ENCODE measurements at regions of chr12 and their contacts with region 1.

Region 1: GRCh38 chr12:102879144-102879763 is 37.8 kb downstream of the PAH start:
- H3K4me3 ChIP-seq: no peak overlapping the region
- H3K27ac ChIP-seq: no peak overlapping the region
- H3K4me1 ChIP-seq: no peaks in the 10 kb centered on the region
- CTCF ChIP-seq: peak; percentile 17; the same call in 1 of the 2 replicates

Region 2: GRCh38 chr12:102800565-102800964 is 78.7 kb before region 1 on chr12:
- CTCF ChIA-PET with region 1: no interaction called
- POLR2A ChIA-PET with region 1: no interaction called
- H3K4me3 ChIP-seq: no peak overlapping the region
- H3K27ac ChIP-seq: no peak overlapping the region
- H3K4me1 ChIP-seq: no peaks in the 10 kb centered on the region
- CTCF ChIP-seq: no peak

Region 3: GRCh38 chr12:102811110-102811737 is 68.0 kb before region 1 on chr12:
- CTCF ChIA-PET with region 1: interaction called, 10 read pairs
- POLR2A ChIA-PET with region 1: no interaction called
- H3K4me3 ChIP-seq: no peak overlapping the region
- H3K27ac ChIP-seq: no peak overlapping the region
- H3K4me1 ChIP-seq: no peaks in the 10 kb centered on the region
- CTCF ChIP-seq: no peak

Region 4: DNA sequence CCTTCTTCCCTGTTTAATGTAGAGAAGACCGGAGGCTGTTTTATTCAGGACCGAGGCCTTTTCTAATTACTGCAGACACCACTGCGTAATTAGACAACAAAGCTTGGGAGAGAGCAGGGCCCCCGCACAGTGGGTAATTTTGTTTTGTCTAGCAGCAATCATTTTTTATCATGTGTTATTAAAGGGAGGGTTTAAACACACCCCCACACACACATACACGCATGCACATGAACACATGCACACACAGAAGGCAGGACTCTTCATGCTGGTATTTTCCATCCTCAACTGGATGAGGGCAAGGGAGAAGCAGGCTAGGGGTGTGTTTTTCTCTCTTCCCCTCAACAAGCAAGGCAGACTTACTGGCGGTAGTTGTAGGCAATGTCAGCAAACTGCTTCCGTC is 13.0 kb before region 1 on chr12:
- CTCF ChIA-PET with region 1: interaction called, 15 read pairs
- POLR2A ChIA-PET with region 1: no interaction called
- H3K4me3 ChIP-seq: no peak overlapping the region
- H3K27ac ChIP-seq: no peak overlapping the region
- H3K4me1 ChIP-seq: no peaks in the 10 kb centered on the region
- CTCF ChIP-seq: no peak

Region 5: DNA sequence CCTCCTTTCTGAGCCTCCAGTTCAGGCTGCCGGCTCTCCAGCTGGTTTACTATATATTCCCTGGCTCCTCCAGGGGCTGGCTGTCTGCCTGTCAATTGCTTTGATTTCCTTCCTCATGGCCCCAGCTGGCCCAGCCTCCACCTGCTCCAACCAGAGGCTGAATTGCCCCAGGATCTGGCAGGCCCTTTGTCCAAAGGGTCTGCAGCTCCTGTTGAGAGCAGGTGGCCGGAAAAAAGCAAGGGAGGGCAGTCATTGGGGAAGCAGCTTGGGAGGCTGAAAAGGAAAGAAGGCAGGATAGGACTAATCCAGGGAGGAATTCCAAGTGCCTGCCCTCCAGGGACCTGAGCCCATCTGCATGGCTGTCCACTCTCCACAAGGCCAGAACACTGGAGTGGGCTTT is 12.5 kb after region 1 on chr12:
- CTCF ChIA-PET with region 1: interaction called, 19 read pairs
- POLR2A ChIA-PET with region 1: no interaction called
- H3K4me3 ChIP-seq: no peak overlapping the region
- H3K27ac ChIP-seq: no peak overlapping the region
- H3K4me1 ChIP-seq: no peaks in the 10 kb centered on the region
- CTCF ChIP-seq: no peak

Region 6: DNA sequence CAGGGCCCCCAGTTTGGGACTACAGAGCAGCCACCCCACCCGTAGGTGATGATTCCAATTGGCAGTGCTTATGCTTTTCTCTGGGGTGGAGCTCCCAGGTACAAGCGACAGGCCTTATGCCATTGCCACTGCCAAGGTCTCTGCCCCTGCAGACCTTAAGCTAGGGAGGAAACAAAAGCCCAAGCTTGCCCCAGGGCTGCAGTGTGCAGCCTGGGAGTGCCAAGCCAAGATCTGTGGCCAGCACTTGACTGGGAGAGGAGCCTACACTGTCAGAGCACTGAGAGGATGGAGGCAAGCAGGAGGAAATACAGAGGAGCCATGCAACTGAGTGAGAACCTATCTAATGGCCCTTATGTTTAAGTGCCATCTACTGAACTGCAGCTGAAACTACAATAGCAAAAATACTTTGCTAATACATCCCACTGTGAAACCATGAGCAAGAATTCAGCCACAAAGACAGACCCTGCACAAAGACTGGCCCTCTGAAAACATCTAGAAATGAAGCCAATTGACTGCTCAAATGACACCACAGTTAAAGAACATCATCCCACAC is 60.5 kb after region 1 on chr12:
- CTCF ChIA-PET with region 1: interaction called, 21 read pairs
- POLR2A ChIA-PET with region 1: no interaction called
- H3K4me3 ChIP-seq: no peak overlapping the region
- H3K27ac ChIP-seq: no peak overlapping the region
- H3K4me1 ChIP-seq: no peaks in the 10 kb centered on the region
- CTCF ChIP-seq: no peak

Region 7: DNA sequence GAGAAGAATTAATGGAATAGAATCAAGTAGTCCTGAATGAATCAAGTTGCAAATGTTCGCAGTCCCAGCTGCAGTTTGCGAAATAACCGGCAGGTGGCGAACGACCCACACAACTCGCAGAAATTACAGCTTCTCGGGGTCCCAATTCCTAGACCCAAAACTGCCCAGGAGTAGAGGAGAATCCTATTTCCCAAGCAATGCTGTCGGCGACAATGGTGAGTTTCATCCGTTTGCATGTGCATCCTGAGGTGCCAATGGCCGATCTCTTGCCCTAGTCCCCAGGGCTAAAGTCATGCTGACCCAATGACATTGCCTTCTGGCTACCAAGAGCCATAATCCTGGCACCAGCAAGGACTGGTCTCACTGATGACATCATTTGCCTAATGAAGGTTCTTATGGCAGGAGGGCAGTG is 69.7 kb after region 1 on chr12:
- CTCF ChIA-PET with region 1: interaction called, 11 read pairs
- POLR2A ChIA-PET with region 1: no interaction called
- H3K4me3 ChIP-seq: no peak overlapping the region
- H3K27ac ChIP-seq: no peak overlapping the region
- H3K4me1 ChIP-seq: no peaks in the 10 kb centered on the region
- CTCF ChIP-seq: peak; percentile 25; the same call in 1 of the 2 replicates